Heart right ventricle (tissue), 16 donors: ENCODE measurements at regions of chr1 and their contacts with region 1.

Region 1: DNA sequence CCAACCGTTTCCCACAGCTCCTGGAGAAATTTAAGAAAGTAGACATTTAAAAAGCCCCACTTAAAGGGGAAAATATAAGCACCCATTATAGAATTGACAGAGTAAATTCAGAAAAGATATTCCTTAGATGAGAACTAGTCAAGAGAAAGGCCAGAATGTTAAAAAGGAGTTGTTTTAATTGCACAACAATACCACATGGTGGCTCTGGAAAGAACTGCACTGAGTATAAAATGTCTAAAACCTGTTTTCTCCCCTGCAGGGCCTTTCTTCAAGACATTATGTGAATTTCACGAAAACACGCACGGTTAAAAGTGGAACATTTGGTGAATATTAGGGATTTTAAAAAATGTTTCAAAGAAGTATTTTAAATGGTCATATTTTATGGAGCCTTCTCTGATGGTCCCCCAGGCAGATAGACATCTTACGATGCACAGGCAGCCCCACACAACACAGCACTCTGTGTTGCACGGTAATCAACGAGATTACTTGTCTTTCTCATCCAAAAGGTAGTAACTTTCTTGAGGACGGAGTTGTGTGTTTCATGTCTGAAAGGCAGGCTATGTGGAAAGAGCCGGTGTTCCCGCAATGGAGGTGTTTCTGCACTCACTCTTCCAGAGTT is 101.9 kb downstream of the PRRX1 start:
- DNase-seq: no peak
- ATAC-seq: peak in 6 of 8 donors; percentile 42 to 67 (median 61)
- H3K4me3 ChIP-seq: no peak overlapping the region
- H3K27ac ChIP-seq: no peak overlapping the region
- H3K4me1 ChIP-seq: peaks cover 0 to 4% (median 0%) of the 10 kb centered on the region in 9 donors
- H3K27me3 ChIP-seq: no peaks in the 10 kb centered on the region
- CTCF ChIP-seq: peak; percentile 25 to 72 (median 57)

Region 2: DNA sequence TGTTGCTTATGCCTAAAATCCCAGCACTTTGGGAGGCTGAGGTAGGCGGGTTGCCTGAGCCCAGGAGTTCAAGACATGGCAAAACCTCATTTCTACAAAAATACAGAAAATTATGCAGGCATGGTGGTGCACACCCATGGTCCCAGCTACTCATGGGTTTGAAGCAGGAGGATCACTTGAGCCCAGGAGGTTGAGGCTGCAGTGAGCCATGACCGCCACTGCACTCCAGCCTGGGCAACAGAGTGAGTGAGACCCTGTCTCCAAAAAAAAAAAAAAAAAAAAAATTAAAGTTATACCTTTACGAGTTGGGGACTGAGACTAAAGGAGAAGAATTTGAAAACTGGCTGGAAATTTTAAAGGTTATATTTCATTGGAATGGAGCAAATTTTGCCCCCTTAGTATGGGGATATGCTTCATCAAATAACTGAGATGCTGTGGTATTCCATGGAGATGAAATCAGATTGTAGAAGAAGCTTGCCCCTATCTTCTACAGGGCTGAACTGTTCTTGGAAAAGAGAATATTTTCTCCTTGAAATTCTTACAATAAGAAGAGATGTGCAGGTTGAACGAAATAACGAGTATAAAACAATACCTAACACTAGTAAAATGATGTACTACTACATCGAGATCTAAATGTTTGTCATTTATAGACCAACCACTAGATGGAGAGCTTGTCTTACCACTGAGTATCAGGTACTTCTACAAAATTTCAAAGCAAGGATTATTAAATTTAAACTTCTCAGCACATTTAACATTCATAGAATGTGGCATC is 837.2 kb before region 1 on chr1:
- intact Hi-C with region 1: loop called in 4 of 10 experiments (anchors 5 to 10 kb)
- DNase-seq: no peak
- ATAC-seq: peak in 2 of 8 donors; percentile 56 to 61
- H3K4me3 ChIP-seq: no peak overlapping the region
- H3K27ac ChIP-seq: no peak overlapping the region
- H3K4me1 ChIP-seq: peaks cover 0 to 16% (median 7%) of the 10 kb centered on the region in 9 donors
- H3K27me3 ChIP-seq: no peaks in the 10 kb centered on the region
- CTCF ChIP-seq: peak; percentile 45 to 86 (median 74)

Region 3: DNA sequence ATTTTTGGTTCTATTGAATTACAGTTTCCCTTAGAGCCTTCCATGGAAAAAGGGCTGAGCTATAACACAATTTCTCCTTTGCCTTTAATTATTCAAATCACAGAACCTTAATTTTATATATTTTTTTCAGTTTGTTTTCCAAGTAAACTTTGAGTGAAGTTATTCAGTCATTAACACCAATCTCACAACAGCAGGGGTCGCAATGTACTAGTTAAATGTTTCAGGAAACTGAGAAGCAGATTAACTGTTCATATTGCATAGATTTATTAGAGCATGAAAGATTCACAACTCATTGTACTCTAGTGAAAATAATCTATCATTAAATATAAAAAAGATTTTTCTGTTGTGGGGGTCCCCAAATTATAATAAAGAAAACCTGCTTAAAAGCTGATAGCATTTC is 755.4 kb before region 1 on chr1:
- intact Hi-C with region 1: loop called in 5 of 10 experiments (anchors 10 kb)
- DNase-seq: peak in 1 of 2 donors; percentile 64
- ATAC-seq: no peak
- H3K4me3 ChIP-seq: no peak overlapping the region
- H3K27ac ChIP-seq: no peak overlapping the region
- H3K4me1 ChIP-seq: no peaks in the 10 kb centered on the region
- H3K27me3 ChIP-seq: no peaks in the 10 kb centered on the region
- CTCF ChIP-seq: peak in 8 of 9 donors; percentile 26 to 73 (median 56)

Region 4: DNA sequence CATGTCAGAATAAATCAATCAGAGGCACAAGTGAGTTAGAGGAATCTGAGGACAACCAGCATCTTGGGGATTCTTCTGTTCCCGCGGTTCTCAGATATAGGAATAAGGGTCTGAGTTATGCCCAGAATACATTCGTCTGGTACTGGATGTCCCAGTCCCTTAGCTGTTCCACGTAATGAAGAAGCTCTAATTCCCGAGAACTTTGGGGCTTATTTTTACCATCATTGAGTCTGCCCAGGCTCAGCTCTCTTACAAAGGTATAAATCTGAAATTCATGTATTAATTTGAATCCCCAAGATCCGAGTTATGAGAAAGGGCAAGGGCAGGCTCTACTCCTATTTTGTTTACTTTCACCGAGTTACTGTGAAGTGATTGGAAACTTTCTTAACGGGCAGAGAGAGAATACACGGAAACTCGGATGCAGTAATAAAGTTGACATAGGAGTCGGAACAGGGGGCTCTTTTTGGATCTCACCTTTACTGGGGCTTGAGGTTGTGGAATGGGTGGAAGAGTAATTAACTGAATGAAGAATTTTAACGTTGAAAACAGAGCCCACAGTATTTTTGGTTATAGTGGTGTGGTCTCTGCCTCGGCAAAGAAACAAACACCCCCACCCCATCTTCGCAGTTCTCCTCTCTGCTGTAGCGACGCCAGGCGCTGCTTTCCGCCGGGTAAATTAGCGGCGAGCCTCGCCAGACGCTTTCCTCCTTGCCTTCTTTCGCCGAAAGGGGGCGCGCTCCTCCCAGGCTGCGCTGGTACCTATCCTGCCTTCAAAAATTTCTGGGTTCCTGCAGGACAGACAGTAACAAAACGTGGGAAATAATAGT is 94.8 kb before region 1 on chr1:
- intact Hi-C with region 1: loop called in 4 of 10 experiments (anchors 5 kb)
- DNase-seq: peak; percentile 56 to 74
- ATAC-seq: peak in 7 of 8 donors; percentile 31 to 73 (median 62)
- H3K4me3 ChIP-seq: peak overlapping the region in 2 of 10 donors; percentile 2 to 9
- H3K27ac ChIP-seq: peak overlapping the region in 5 of 10 donors; percentile 4 to 98 (median 17)
- H3K4me1 ChIP-seq: peaks cover 0 to 77% (median 35%) of the 10 kb centered on the region in 9 donors
- H3K27me3 ChIP-seq: peaks cover 0 to 79% (median 16%) of the 10 kb centered on the region in 7 donors
- CTCF ChIP-seq: peak; percentile 49 to 72 (median 69)

Region 5: DNA sequence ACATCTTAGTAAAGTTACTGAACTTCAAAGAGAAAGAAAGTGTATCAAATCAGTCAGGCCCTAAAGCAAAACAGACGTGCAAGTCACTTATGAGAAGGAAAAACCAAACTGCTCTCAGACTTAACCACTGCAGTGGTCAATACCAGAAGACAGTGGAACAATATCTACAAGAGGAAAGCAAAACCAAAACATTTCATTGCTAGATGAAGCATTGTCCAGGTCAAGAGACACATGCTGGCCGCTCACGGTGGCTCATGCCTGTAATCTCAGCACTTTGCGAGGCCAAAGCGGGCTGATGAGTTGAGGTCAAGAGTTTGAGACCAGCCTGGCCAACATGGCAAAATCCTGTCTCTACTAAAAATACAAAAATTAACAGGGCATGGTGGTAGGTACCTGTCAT is 87.5 kb after region 1 on chr1:
- intact Hi-C with region 1: no loop called
- DNase-seq: no peak
- ATAC-seq: no peak
- H3K4me3 ChIP-seq: no peak overlapping the region
- H3K27ac ChIP-seq: no peak overlapping the region
- H3K4me1 ChIP-seq: peaks cover 0 to 14% (median 0%) of the 10 kb centered on the region in 9 donors
- H3K27me3 ChIP-seq: no peaks in the 10 kb centered on the region
- CTCF ChIP-seq: no peak

Region 6: DNA sequence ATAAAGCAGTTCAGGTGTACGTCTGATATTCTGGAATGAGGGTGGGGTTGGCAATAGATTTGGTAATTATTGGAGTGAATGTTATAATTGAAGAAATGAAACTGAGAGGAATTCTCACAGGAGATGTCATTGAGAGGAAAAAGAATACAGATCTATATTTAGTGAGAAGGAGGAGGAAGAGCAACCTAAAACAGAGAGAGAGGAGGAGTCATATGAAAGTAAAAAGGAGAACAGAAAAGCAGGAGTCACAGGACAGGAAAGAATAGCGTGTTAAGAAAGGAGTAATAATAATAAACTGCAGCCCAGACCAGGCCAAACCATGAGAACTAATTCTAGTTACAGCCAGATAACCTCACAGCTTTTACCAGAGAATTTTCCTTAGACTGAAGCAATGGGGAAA is 106.8 kb after region 1 on chr1:
- intact Hi-C with region 1: loop called in 2 of 10 experiments (anchors 10 kb)
- DNase-seq: no peak
- ATAC-seq: peak in 2 of 8 donors; percentile 34 to 35
- H3K4me3 ChIP-seq: no peak overlapping the region
- H3K27ac ChIP-seq: peak overlapping the region in 1 of 10 donors; percentile 11
- H3K4me1 ChIP-seq: peaks cover 0 to 17% (median 10%) of the 10 kb centered on the region in 9 donors
- H3K27me3 ChIP-seq: no peaks in the 10 kb centered on the region
- CTCF ChIP-seq: no peak